ENCODE measurements at regions of chr9 and their contacts with region 1.

Region 1: GRCh38 chr9:28319981-28320380 is 746.7 kb upstream of the C9orf72 start:
- DNase-seq: no peak
- ATAC-seq: no peak

Region 2: DNA sequence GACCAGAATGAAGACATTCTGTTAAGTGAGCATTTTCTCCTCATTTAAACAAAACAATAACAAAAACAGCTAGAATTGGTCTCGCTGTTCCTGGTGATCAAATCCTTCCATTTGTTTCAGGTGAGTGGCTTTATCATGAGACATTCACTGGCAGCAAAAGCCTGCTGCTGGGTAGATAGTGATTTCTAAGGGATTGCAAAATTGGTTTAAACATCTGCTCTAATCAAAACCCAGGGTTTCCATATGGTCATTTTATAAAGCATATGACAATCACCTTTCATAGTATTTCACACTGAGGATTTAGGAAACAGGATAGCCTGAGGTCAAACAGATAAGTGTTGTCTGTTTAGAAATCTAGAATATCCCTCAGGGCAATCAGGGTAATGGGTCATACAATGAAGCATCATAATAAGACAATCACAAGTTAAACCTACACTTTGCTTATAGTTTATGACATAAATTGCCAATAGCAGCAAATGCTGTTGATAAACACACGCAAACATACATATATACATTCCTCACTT is 22.9 kb after region 1 on chr9:
- intact Hi-C with region 1: loop called (anchors 1 kb)
- DNase-seq: no peak
- ATAC-seq: no peak

Measured in sciatic nerve (tissue), 2 donors.